Activated CD4-positive, alpha-beta T cell treated with anti-CD3 and anti-CD28 coated beads, Interleukin-2, amount 10 ng/mL, durations not matched to agents 24 days and 14 days (primary cell): ENCODE measurements at regions of chr1 and their contacts with region 1.

Region 1: GRCh38 chr1:214464445-214465287 is 86.7 kb downstream of the PTPN14 start:
- DNase-seq: no peak
- H3K4me3 Mint-ChIP-seq: no peak overlapping the region
- H3K27ac Mint-ChIP-seq: peak overlapping the region; percentile 20
- H3K4me1 Mint-ChIP-seq: no peaks in the 10 kb centered on the region
- H3K27me3 Mint-ChIP-seq: no peaks in the 10 kb centered on the region

Region 2: GRCh38 chr1:214506972-214507482 is 42.4 kb after region 1 on chr1:
- intact Hi-C with region 1: loop called (anchors 5 kb)
- DNase-seq: no peak
- H3K4me3 Mint-ChIP-seq: no peak overlapping the region
- H3K27ac Mint-ChIP-seq: no peak overlapping the region
- H3K4me1 Mint-ChIP-seq: peaks cover 8% of the 10 kb centered on the region
- H3K27me3 Mint-ChIP-seq: peaks cover 8% of the 10 kb centered on the region

Region 3: GRCh38 chr1:214688891-214689290 is 224.2 kb after region 1 on chr1:
- intact Hi-C with region 1: no loop called
- DNase-seq: no peak
- H3K4me3 Mint-ChIP-seq: no peak overlapping the region
- H3K27ac Mint-ChIP-seq: no peak overlapping the region
- H3K4me1 Mint-ChIP-seq: no peaks in the 10 kb centered on the region
- H3K27me3 Mint-ChIP-seq: peaks cover 3% of the 10 kb centered on the region